Transverse colon (tissue), 4 donors: ENCODE measurements at regions of chr6 and their contacts with region 1.

Region 1: DNA sequence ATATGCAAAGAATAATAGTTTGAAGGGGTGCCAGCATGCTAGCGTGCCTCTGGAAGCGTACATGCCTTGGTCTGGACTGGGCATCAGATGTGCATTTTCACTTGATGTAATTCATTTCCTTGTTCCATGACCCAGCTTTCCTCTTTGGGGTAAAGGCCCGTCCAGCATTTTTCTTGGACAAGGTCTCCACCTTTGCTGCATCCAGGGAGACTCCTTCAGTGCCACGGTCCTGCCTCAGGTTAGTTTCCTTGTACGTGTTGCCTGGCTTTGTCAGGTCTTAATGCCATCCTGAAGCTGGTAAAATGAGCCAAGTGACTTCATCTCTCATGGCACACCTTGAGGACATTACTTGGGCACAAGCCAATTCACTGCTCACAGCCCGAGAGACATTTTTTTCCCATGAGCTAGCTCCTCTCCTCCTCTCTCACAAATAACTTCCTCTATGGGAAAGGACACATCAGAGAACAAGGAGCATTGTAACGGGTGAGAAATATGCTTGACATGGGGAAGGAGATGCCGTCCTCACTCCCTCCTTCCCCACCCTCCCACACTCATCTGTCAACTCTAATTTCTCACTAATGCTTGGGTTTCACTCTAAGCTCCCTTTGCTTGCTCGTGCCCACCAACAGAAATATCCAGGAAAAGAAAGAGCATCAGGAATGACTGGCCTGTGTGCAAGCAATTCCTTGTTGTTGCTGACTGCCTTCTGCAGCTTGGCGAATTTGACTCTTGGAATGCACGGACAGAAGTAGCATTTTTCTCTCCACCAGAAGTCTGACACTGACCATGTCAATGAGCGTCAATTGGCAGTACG is 24.0 kb downstream of the EDN1 start:
- DNase-seq: peak; percentile 38
- H3K4me3 ChIP-seq: no peak overlapping the region
- H3K27ac ChIP-seq: peak overlapping the region in 2 of 4 donors; percentile 3 to 35
- H3K4me1 ChIP-seq: peaks cover 0 to 9% (median 4%) of the 10 kb centered on the region in 4 donors
- H3K27me3 ChIP-seq: no peaks in the 10 kb centered on the region
- CTCF ChIP-seq: no peak
- EP300 ChIP-seq: no peak
- POLR2A ChIP-seq: no peak

Region 2: DNA sequence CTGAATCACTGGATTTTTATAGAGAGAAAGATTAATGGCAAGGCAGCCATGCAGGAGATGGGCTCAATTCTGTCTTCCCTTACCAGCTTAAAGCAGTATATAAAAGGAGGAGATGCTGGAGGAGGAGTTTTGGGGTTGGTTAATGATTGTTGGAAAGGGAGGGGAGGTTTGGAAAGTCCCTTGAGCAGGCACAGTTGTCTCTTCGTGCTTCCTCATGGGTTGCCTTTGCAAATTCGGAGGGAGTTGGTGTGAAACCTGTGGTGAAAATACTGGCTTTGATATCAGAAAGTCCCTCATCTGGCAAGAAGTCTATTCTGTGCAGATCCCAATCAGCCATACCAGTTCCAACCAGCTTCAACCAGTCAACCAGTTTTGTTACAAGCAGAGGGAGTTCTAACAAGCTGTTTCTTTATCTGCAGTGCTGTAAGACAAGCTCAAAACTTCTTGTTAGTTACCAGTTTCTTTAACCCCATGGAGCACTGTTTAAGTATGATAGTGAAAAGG is 195.1 kb before region 1 on chr6:
- in situ Hi-C with region 1: no loop called
- intact Hi-C with region 1: no loop called
- DNase-seq: no peak
- H3K4me3 ChIP-seq: no peak overlapping the region
- H3K27ac ChIP-seq: peak overlapping the region in 2 of 4 donors; percentile 4 to 7
- H3K4me1 ChIP-seq: peaks cover 0 to 12% (median 7%) of the 10 kb centered on the region in 4 donors
- H3K27me3 ChIP-seq: no peaks in the 10 kb centered on the region
- CTCF ChIP-seq: no peak
- EP300 ChIP-seq: no peak
- POLR2A ChIP-seq: no peak

Region 3: DNA sequence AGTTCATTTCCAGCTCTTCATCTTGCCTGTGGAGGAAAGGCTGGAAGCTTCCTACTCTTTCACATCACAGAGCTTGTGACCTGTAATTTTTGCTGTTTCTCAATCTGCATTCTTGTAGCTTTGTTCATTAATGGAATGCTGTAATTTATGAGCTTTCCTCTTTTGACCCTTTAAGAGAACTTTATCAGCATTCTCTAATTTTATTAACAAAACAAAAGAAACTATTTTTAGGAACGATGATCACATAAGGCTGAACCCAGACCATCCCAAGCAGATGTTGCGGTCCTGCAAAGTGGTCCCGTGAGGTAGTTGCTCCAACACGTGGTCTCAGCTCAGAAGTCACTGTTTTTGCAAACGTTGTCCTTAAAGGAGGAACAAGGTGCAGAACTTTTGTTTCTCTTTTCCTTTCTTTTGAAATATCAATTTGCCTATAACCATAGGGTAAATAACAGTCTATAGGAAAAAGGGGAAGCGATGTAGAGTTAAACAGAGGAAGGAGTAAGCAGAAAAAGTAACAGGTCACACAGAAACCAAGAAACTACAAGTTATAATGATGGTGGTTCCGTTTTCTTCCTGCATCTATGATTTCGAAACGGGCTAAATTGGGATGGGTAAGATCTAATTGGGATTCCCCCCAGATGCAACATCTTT is 281.1 kb after region 1 on chr6:
- in situ Hi-C with region 1: loop called in 1 of 4 experiments (anchors 25 kb)
- intact Hi-C with region 1: no loop called
- DNase-seq: no peak
- H3K4me3 ChIP-seq: no peak overlapping the region
- H3K27ac ChIP-seq: no peak overlapping the region
- H3K4me1 ChIP-seq: no peaks in the 10 kb centered on the region
- H3K27me3 ChIP-seq: no peaks in the 10 kb centered on the region
- CTCF ChIP-seq: no peak
- EP300 ChIP-seq: no peak
- POLR2A ChIP-seq: no peak